B cell (primary cell): ENCODE measurements at regions of chr12 and their contacts with region 1.

Region 1: DNA sequence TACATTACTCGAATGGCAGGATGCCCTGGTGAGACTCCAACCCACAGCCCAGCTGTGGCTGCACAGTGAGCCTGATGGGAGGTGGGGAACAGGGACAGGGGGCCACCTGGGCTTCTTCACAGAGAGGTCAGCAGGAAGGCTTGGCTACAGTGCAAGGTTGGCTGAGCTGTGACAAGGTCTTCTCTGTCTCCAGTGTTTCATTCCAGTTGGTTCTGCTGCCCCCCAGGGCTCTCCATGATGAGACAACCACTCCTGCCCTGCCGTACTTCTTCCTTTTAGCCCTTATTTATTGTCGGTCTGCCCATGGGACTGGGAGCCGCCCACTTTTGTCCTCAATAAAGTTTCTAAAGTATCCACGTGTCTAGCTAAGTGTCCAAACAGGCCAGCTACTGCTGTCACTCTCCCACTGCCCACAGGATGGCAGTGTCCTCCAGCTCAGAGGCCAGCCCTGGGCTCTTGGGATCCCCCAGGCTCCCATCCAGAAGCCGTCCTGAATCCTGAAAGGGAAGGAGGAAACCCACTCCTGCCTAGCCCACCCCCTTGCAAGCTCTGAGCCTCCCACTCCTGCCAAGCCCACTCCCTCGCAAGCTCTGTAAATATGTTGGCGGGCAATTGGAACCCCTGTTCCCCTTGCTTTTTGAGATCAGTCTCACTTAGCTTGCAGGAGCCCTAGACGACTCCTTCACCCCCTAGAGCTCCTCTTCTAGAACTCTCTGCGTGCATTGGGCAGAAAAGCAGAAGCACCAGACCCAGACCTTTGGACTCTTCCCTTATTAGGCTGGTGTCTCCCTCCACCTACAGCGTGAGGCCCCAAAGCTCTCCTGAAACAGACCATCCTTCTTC is 5.4 kb downstream of the C1QL4 start:
- DNase-seq: peak; percentile 37
- ATAC-seq: no peak
- H3K4me3 ChIP-seq: no peak overlapping the region
- H3K4me3 Mint-ChIP-seq: peak overlapping the region; percentile 29
- H3K27ac ChIP-seq: no peak overlapping the region
- H3K27ac Mint-ChIP-seq: no peak overlapping the region
- H3K4me1 ChIP-seq: peaks cover 19 to 23% of the 10 kb centered on the region in 2 donors
- H3K4me1 Mint-ChIP-seq: peaks cover 19% of the 10 kb centered on the region
- H3K27me3 ChIP-seq: peaks cover 0 to 51% (median 32%) of the 10 kb centered on the region in 4 experiments
- H3K27me3 Mint-ChIP-seq: peaks cover 38% of the 10 kb centered on the region
- CTCF ChIP-seq: peak; percentile 45

Region 2: DNA sequence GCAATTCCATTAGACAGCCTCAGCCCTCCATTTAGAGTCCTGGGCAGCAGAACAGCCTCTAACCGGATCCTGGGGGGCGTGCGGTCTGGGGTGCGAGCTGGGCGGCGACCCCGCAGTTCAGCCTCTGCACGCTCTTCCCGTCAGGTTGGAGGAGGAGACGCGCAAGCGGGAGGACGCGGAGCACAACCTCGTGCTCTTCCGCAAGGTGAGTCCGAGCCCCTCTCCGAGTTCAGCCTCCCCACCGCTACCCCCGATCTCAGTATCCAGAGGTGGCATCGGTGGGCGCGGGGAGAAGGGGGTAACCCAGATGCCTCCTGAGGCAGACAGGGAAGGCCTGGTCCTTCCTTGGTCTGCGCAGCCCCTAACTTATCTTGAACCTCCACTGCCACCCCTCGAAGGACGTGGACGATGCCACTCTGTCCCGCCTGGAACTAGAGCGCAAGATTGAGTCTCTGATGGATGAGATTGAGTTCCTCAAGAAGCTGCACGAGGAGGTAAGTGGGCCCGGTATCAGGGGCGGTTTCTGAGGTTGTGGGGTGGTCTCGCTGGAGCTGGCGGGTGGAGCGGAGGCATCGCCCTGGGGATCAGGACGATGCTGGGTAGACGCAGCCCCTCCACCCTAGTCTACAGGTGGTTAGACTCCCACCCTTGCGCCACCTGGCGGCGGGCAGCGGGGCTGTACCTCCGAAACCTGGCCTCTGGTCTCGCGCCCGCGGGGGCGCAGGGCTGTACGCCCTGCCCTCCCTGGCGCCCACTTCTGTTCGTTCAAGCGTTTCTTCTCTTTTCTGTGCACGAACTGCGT is 35.4 kb before region 1 on chr12:
- CTCF ChIA-PET with region 1: interaction called, 13 read pairs
- POLR2A ChIA-PET with region 1: interaction called, 3 read pairs
- intact Hi-C with region 1: no loop called
- DNase-seq: peak; percentile 79
- ATAC-seq: peak; percentile 62
- H3K4me3 ChIP-seq: peak overlapping the region in 3 of 5 experiments; percentile 24 to 42 (median 29)
- H3K4me3 Mint-ChIP-seq: peak overlapping the region; percentile 79
- H3K27ac ChIP-seq: no peak overlapping the region
- H3K27ac Mint-ChIP-seq: no peak overlapping the region
- H3K4me1 ChIP-seq: peaks cover 30 to 40% of the 10 kb centered on the region in 2 donors
- H3K4me1 Mint-ChIP-seq: peaks cover 27% of the 10 kb centered on the region
- H3K27me3 ChIP-seq: peaks cover 0 to 67% (median 34%) of the 10 kb centered on the region in 4 experiments
- H3K27me3 Mint-ChIP-seq: peaks cover 48% of the 10 kb centered on the region
- CTCF ChIP-seq: peak; percentile 80

Region 3: GRCh38 chr12:49369411-49370145 is 38.0 kb after region 1 on chr12:
- CTCF ChIA-PET with region 1: no interaction called
- POLR2A ChIA-PET with region 1: no interaction called
- intact Hi-C with region 1: no loop called
- DNase-seq: peak; percentile 71
- ATAC-seq: peak; percentile 8
- H3K4me3 ChIP-seq: no peak overlapping the region
- H3K4me3 Mint-ChIP-seq: peak overlapping the region; percentile 46
- H3K27ac ChIP-seq: peak overlapping the region; percentile 17 to 41
- H3K27ac Mint-ChIP-seq: peak overlapping the region; percentile 85
- H3K4me1 ChIP-seq: peaks cover 33 to 39% of the 10 kb centered on the region in 2 donors
- H3K4me1 Mint-ChIP-seq: peaks cover 46% of the 10 kb centered on the region
- H3K27me3 ChIP-seq: no peaks in the 10 kb centered on the region
- H3K27me3 Mint-ChIP-seq: no peaks in the 10 kb centered on the region
- CTCF ChIP-seq: peak; percentile 47